Caco-2 (cell line): ENCODE measurements at regions of chr9 and their contacts with region 1.

Region 1: DNA sequence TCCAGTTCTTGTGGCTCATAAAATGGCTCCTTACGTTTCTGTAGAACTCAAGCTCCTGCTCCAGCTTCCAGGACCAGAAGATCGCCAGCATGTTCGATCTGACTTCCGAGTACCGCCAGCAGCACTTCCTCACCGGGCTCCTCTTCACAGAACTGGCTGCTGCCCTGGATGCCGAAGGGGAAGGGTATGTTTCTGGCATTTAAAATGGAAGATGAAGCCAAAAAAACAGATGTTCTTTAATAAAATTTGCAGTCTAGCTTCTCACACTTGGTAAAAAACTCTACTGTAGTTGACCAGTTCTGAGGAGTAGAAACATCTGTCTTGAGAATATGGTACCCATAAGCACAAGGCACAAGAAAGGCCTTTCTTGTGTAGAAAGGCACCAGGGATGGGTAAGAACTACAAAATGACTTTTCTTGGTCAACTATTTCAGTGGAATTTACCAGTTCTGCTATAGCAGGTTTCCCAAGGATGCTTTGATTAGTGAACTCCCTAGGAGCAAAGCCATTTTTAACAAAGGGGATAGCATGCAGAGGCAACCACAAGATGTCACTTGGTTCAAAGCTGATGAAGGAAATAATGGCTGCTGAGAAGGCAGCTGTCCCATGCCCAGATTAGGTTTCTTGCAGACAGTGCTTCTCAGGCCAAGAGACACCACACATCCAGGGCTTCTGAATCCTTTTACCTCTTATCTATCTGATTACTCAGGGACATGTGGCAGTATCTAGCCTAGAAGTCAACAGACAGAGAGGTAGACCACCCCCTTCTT is 192.4 kb downstream of the DOCK8 start:
- DNase-seq: peak in 1 of 2 experiments; percentile 20
- H3K4me3 ChIP-seq: no peak overlapping the region
- H3K4me3 Mint-ChIP-seq: no peak overlapping the region
- H3K27ac Mint-ChIP-seq: no peak overlapping the region
- H3K4me1 ChIP-seq: no peaks in the 10 kb centered on the region
- H3K4me1 Mint-ChIP-seq: peaks cover 7% of the 10 kb centered on the region
- H3K27me3 ChIP-seq: no peaks in the 10 kb centered on the region
- H3K27me3 Mint-ChIP-seq: no peaks in the 10 kb centered on the region
- CTCF ChIP-seq: peak in 1 of 2 experiments; percentile 19

Region 2: GRCh38 chr9:316382-316965 is 90.6 kb before region 1 on chr9:
- CTCF ChIA-PET with region 1: no interaction called
- POLR2A ChIA-PET with region 1: no interaction called
- intact Hi-C with region 1: no loop called
- DNase-seq: no peak
- H3K4me3 ChIP-seq: no peak overlapping the region
- H3K4me3 Mint-ChIP-seq: no peak overlapping the region
- H3K27ac Mint-ChIP-seq: no peak overlapping the region
- H3K4me1 ChIP-seq: no peaks in the 10 kb centered on the region
- H3K4me1 Mint-ChIP-seq: no peaks in the 10 kb centered on the region
- H3K27me3 ChIP-seq: no peaks in the 10 kb centered on the region
- H3K27me3 Mint-ChIP-seq: no peaks in the 10 kb centered on the region
- CTCF ChIP-seq: no peak

Region 3: GRCh38 chr9:447230-448025 is 40.4 kb after region 1 on chr9:
- CTCF ChIA-PET with region 1: no interaction called
- POLR2A ChIA-PET with region 1: no interaction called
- intact Hi-C with region 1: no loop called
- DNase-seq: peak; percentile 16 to 39
- H3K4me3 ChIP-seq: no peak overlapping the region
- H3K4me3 Mint-ChIP-seq: no peak overlapping the region
- H3K27ac Mint-ChIP-seq: no peak overlapping the region
- H3K4me1 ChIP-seq: peaks cover 19% of the 10 kb centered on the region; the same call in 1 of the 2 replicates
- H3K4me1 Mint-ChIP-seq: peaks cover 4% of the 10 kb centered on the region
- H3K27me3 ChIP-seq: no peaks in the 10 kb centered on the region
- H3K27me3 Mint-ChIP-seq: no peaks in the 10 kb centered on the region
- CTCF ChIP-seq: no peak

Region 4: GRCh38 chr9:546797-547223 is 139.7 kb after region 1 on chr9:
- CTCF ChIA-PET with region 1: no interaction called
- POLR2A ChIA-PET with region 1: no interaction called
- intact Hi-C with region 1: loop called (anchors 1 kb)
- DNase-seq: peak in 1 of 2 experiments; percentile 17
- H3K4me3 ChIP-seq: no peak overlapping the region
- H3K4me3 Mint-ChIP-seq: no peak overlapping the region
- H3K27ac Mint-ChIP-seq: peak overlapping the region; percentile 35
- H3K4me1 ChIP-seq: 0 out of 2 replicates have a peak, but pooled peaks cover 4% of the 10 kb centered on the region
- H3K4me1 Mint-ChIP-seq: peaks cover 27% of the 10 kb centered on the region
- H3K27me3 ChIP-seq: no peaks in the 10 kb centered on the region
- H3K27me3 Mint-ChIP-seq: no peaks in the 10 kb centered on the region
- CTCF ChIP-seq: peak; percentile 16 to 38